ENCODE measurements at regions of chr2 and their contacts with region 1.

Region 1: GRCh38 chr2:201231781-201232466 is 28.4 kb upstream of the CASP8 start:
- DNase-seq: peak; percentile 82
- ATAC-seq: peak; percentile 52
- H3K4me3 Mint-ChIP-seq: peak overlapping the region; percentile 95
- H3K27ac Mint-ChIP-seq: peak overlapping the region; percentile 97
- H3K4me1 Mint-ChIP-seq: peaks cover 47% of the 10 kb centered on the region
- H3K27me3 Mint-ChIP-seq: no peaks in the 10 kb centered on the region

Region 2: GRCh38 chr2:200888704-200889625 is 343.0 kb before region 1 on chr2 and contains the starts of genes NIF3L1 and PPIL3:
- POLR2A ChIA-PET with region 1: interaction called, 15 read pairs
- DNase-seq: peak; percentile 94
- ATAC-seq: peak; percentile 79
- H3K4me3 Mint-ChIP-seq: peak within 1 kb of the TSS; percentile 96
- H3K27ac Mint-ChIP-seq: peak within 1 kb of the TSS; percentile 99
- H3K4me1 Mint-ChIP-seq: peaks cover 35% of the 10 kb centered on the region
- H3K27me3 Mint-ChIP-seq: no peaks in the 10 kb centered on the region
- total RNA-seq, gene NIF3L1: 36.9 to 37.7 TPM
- total RNA-seq, gene PPIL3: 44.2 to 45.2 TPM

Region 3: DNA sequence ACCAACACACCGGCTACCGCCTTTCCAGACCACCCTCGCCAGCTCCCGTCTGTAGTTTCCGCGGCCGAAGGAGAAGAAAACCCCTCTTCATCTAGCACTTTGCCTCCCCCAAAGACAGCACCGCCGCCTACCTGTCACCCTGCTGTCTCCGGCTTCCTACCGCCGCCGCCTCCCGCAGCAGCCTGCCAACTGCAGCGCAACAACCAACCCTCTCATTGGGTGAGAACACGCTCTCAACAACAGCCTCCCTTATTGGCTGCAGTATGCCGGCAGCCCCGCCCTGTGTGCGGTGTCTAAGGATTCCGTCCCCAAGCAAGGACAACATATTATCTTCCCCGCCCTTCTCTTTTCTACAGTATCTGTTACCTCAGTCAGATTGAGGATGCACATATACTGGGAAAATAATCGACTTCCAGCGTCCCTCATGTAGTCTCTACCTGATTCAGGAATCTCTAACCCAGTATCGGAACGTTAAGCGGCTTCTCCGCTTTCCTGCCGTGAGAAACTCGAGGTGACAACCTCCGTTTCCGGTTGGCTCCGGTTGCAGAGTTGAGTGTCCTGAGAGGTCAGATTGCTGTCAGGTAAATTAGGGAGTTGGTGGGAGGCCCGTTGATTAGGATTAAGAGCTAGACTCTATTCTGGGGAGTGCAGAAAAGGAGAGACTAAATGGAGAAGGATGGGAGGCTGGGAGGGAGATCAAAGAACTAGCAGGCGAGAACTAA is 160.3 kb before region 1 on chr2 and contains the starts of genes HYCC2 and NDUFB3:
- POLR2A ChIA-PET with region 1: interaction called, 10 read pairs
- DNase-seq: peak; percentile 88
- ATAC-seq: peak; percentile 97
- H3K4me3 Mint-ChIP-seq: peak within 1 kb of the TSS; percentile 90
- H3K27ac Mint-ChIP-seq: peak within 1 kb of the TSS; percentile 87
- H3K4me1 Mint-ChIP-seq: peaks cover 32% of the 10 kb centered on the region
- H3K27me3 Mint-ChIP-seq: no peaks in the 10 kb centered on the region
- total RNA-seq, gene HYCC2: 37.0 to 40.5 TPM
- total RNA-seq, gene NDUFB3: 115 to 116 TPM

Region 4: GRCh38 chr2:201090574-201090973 is 141.3 kb before region 1 on chr2:
- POLR2A ChIA-PET with region 1: no interaction called
- DNase-seq: no peak
- ATAC-seq: no peak
- H3K4me3 Mint-ChIP-seq: no peak overlapping the region
- H3K27ac Mint-ChIP-seq: no peak overlapping the region
- H3K4me1 Mint-ChIP-seq: no peaks in the 10 kb centered on the region
- H3K27me3 Mint-ChIP-seq: no peaks in the 10 kb centered on the region

Region 5: DNA sequence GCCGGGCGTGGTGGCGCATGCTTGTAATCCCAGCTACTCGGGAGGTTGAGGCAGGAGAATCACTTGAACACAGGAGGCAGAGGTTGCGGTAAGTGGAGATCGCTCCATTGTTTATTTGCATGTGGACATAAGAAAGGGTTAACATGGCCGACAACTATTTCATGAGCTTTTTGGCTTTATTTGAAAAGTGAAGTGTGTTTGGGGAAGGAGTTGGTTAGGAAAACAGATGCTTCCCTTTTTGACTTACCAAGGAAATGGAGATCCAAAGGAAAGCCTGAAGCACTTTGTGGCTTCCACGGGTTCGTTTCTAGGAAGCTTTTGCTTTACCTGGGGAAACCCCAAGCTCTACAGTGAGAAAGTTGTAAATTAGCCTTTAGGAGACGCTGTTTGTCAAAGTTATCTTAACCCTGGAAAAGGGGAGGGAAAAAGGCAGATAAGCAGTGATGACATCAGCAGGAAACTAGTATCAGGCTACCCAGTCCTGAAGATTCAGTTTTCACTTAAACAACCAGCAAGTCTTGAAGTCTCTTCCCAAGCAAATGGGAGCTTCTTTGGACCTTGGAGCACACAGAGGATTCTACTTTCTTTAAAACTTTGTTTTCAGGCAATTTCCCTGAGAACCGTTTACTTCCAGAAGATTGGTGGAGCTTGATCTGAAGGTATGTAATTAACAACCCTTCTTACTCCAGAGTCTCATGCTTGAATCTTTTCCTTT is 49.1 kb before region 1 on chr2 and contains the start of gene CASP10:
- POLR2A ChIA-PET with region 1: interaction called, 120 read pairs
- DNase-seq: no peak
- ATAC-seq: peak; percentile 78
- H3K4me3 Mint-ChIP-seq: peak within 1 kb of the TSS; percentile 96
- H3K27ac Mint-ChIP-seq: peak within 1 kb of the TSS; percentile 92
- H3K4me1 Mint-ChIP-seq: peaks cover 41% of the 10 kb centered on the region
- H3K27me3 Mint-ChIP-seq: no peaks in the 10 kb centered on the region
- total RNA-seq, gene CASP10: 45.2 to 46.1 TPM

Region 6: GRCh38 chr2:201246280-201246679 is 14.4 kb after region 1 on chr2:
- POLR2A ChIA-PET with region 1: interaction called, 13 read pairs
- DNase-seq: no peak
- ATAC-seq: no peak
- H3K4me3 Mint-ChIP-seq: no peak overlapping the region
- H3K27ac Mint-ChIP-seq: peak overlapping the region; percentile 34
- H3K4me1 Mint-ChIP-seq: peaks cover 22% of the 10 kb centered on the region
- H3K27me3 Mint-ChIP-seq: no peaks in the 10 kb centered on the region

Region 7: GRCh38 chr2:201451292-201452057 is 219.6 kb after region 1 on chr2 and contains the starts of genes STRADB and TRAK2:
- POLR2A ChIA-PET with region 1: interaction called, 24 read pairs
- DNase-seq: peak; percentile 95
- ATAC-seq: peak; percentile 88
- H3K4me3 Mint-ChIP-seq: peak within 1 kb of the TSS; percentile 88
- H3K27ac Mint-ChIP-seq: peak within 1 kb of the TSS; percentile 94
- H3K4me1 Mint-ChIP-seq: peaks cover 39% of the 10 kb centered on the region
- H3K27me3 Mint-ChIP-seq: no peaks in the 10 kb centered on the region
- total RNA-seq, gene STRADB: 24.9 to 28.9 TPM
- total RNA-seq, gene TRAK2: 43.1 to 48.8 TPM

Measured in activated naive CD8-positive, alpha-beta T cell treated with anti-CD3 and anti-CD28 coated beads, Interleukin-2, amount 10 ng/mL, durations not matched to agents 7 days and 5 days (primary cell).